ENCODE measurements at regions of chr10 and their contacts with region 1.

Region 1: GRCh38 chr10:26881600-26882331 is 21.0 kb upstream of the ABI1 start:
- DNase-seq: peak in 2 of 9 experiments; percentile 68 to 71
- ATAC-seq: peak; percentile 64
- H3K4me3 ChIP-seq: no peak overlapping the region
- H3K4me3 Mint-ChIP-seq: no peak overlapping the region
- H3K27ac ChIP-seq: no peak overlapping the region
- H3K27ac Mint-ChIP-seq: no peak overlapping the region
- H3K4me1 ChIP-seq: no peaks in the 10 kb centered on the region
- H3K4me1 Mint-ChIP-seq: peaks cover 3% of the 10 kb centered on the region
- H3K27me3 ChIP-seq: peaks cover 0 to 2% of the 10 kb centered on the region in 2 experiments
- H3K27me3 Mint-ChIP-seq: peaks cover 23% of the 10 kb centered on the region
- CTCF ChIP-seq: peak; percentile 70

Region 2: DNA sequence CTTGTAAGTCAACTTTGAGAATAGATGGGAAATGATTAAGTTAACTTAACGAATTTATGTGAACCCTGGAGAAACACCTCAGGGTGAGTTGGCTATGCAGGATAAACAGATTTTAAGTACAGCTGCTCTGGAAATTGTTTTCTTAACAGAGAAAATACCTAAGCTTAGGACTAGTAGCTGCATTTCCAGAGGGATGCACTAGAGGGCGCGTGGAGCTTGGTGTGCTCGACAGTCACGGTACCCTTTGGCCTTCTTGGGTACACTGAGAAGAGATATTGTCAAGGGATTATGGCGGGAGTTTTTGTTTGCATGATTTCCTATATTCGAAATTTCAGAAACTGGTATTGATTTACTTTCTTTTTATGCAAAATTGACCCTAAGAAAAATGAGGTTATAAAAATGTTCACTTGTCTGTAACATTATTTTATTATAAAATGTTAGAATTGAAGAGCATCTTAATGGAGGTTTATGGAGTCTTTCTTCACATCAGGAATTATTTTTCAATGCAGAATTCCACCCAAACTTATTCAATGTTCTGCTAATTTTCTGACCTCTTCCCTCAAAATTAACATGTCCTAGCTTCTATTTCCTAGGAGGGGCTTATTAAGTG is 1006.1 kb before region 1 on chr10:
- CTCF ChIA-PET with region 1: interaction called, 4 read pairs
- POLR2A ChIA-PET with region 1: no interaction called
- intact Hi-C with region 1: loop called in 1 of 2 experiments (anchors 5 kb)
- DNase-seq: peak; percentile 21 to 66 (median 59)
- ATAC-seq: peak; percentile 62
- H3K4me3 ChIP-seq: no peak overlapping the region
- H3K4me3 Mint-ChIP-seq: no peak overlapping the region
- H3K27ac ChIP-seq: no peak overlapping the region
- H3K27ac Mint-ChIP-seq: no peak overlapping the region
- H3K4me1 ChIP-seq: no peaks in the 10 kb centered on the region
- H3K4me1 Mint-ChIP-seq: no peaks in the 10 kb centered on the region
- H3K27me3 ChIP-seq: no peaks in the 10 kb centered on the region
- H3K27me3 Mint-ChIP-seq: no peaks in the 10 kb centered on the region
- CTCF ChIP-seq: peak; percentile 67

Region 3: GRCh38 chr10:26556748-26557640 is 324.8 kb before region 1 on chr10:
- CTCF ChIA-PET with region 1: no interaction called
- POLR2A ChIA-PET with region 1: no interaction called
- intact Hi-C with region 1: loop called in 1 of 2 experiments (anchors 5 kb)
- DNase-seq: peak in 8 of 9 experiments; percentile 5 to 70 (median 34)
- ATAC-seq: peak; percentile 64
- H3K4me3 ChIP-seq: no peak overlapping the region
- H3K4me3 Mint-ChIP-seq: no peak overlapping the region
- H3K27ac ChIP-seq: no peak overlapping the region
- H3K27ac Mint-ChIP-seq: peak overlapping the region; percentile 91
- H3K4me1 ChIP-seq: no peaks in the 10 kb centered on the region
- H3K4me1 Mint-ChIP-seq: peaks cover 15% of the 10 kb centered on the region
- H3K27me3 ChIP-seq: no peaks in the 10 kb centered on the region
- H3K27me3 Mint-ChIP-seq: no peaks in the 10 kb centered on the region
- CTCF ChIP-seq: peak; percentile 99

Region 4: GRCh38 chr10:26612151-26612915 is 269.4 kb before region 1 on chr10:
- CTCF ChIA-PET with region 1: interaction called, 8 read pairs
- POLR2A ChIA-PET with region 1: interaction called, 3 read pairs
- intact Hi-C with region 1: loop called in 1 of 2 experiments (anchors 2 kb)
- DNase-seq: no peak
- ATAC-seq: no peak
- H3K4me3 ChIP-seq: no peak overlapping the region
- H3K4me3 Mint-ChIP-seq: no peak overlapping the region
- H3K27ac ChIP-seq: no peak overlapping the region
- H3K27ac Mint-ChIP-seq: no peak overlapping the region
- H3K4me1 ChIP-seq: no peaks in the 10 kb centered on the region
- H3K4me1 Mint-ChIP-seq: no peaks in the 10 kb centered on the region
- H3K27me3 ChIP-seq: no peaks in the 10 kb centered on the region
- H3K27me3 Mint-ChIP-seq: no peaks in the 10 kb centered on the region
- CTCF ChIP-seq: no peak

Region 5: DNA sequence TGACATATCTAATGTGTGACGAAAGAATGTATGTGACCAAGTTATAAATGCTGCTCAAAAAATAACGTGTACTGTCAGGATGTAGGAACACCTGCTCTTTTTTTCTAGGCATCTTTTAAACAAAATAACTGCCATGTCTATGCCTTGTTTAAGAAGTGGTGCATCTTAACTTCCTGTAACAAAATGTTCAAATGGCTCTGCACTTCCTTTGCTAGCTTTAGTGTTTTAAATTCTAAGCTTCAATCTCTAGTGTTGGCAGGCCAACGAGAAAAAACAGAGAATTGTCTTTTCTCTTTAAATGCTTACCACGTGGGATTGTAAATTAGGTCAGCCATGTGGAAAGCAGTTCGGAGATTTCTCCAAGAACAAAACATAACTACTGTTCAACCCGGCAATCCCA is 198.8 kb before region 1 on chr10:
- CTCF ChIA-PET with region 1: interaction called, 10 read pairs
- POLR2A ChIA-PET with region 1: no interaction called
- intact Hi-C with region 1: loop called in 1 of 2 experiments (anchors 1 kb)
- DNase-seq: peak in 2 of 9 experiments; percentile 52 to 74
- ATAC-seq: peak; percentile 82
- H3K4me3 ChIP-seq: peak overlapping the region in 1 of 2 experiments; percentile 22
- H3K4me3 Mint-ChIP-seq: peak overlapping the region; percentile 35
- H3K27ac ChIP-seq: peak overlapping the region; percentile 56 to 61
- H3K27ac Mint-ChIP-seq: peak overlapping the region; percentile 92
- H3K4me1 ChIP-seq: peaks cover 36% of the 10 kb centered on the region
- H3K4me1 Mint-ChIP-seq: peaks cover 37% of the 10 kb centered on the region
- H3K27me3 ChIP-seq: no peaks in the 10 kb centered on the region
- H3K27me3 Mint-ChIP-seq: no peaks in the 10 kb centered on the region
- CTCF ChIP-seq: no peak

Region 6: GRCh38 chr10:26697163-26697921 is 184.4 kb before region 1 on chr10 and contains the start of gene PDSS1:
- CTCF ChIA-PET with region 1: interaction called, 12 read pairs
- POLR2A ChIA-PET with region 1: no interaction called
- intact Hi-C with region 1: no loop called
- DNase-seq: peak; percentile 23 to 82 (median 60)
- ATAC-seq: peak; percentile 73
- H3K4me3 ChIP-seq: peak within 1 kb of the TSS; percentile 85 to 92
- H3K4me3 Mint-ChIP-seq: peak within 1 kb of the TSS; percentile 94
- H3K27ac ChIP-seq: peak within 1 kb of the TSS; percentile 69 to 81
- H3K27ac Mint-ChIP-seq: peak within 1 kb of the TSS; percentile 93
- H3K4me1 ChIP-seq: peaks cover 18% of the 10 kb centered on the region
- H3K4me1 Mint-ChIP-seq: peaks cover 35% of the 10 kb centered on the region
- H3K27me3 ChIP-seq: no peaks in the 10 kb centered on the region
- H3K27me3 Mint-ChIP-seq: no peaks in the 10 kb centered on the region
- CTCF ChIP-seq: no peak
- total RNA-seq, gene PDSS1: 3.4 to 3.7 TPM